ENCODE measurements at regions of chr2 and their contacts with region 1.

Region 1: GRCh38 chr2:175855794-175856453 is 146.1 kb downstream of the LNPK start:
- DNase-seq: peak; percentile 75
- H3K4me3 Mint-ChIP-seq: peak overlapping the region; percentile 18
- H3K27ac Mint-ChIP-seq: peak overlapping the region; percentile 75
- H3K4me1 Mint-ChIP-seq: peaks cover 7% of the 10 kb centered on the region
- H3K27me3 Mint-ChIP-seq: peaks cover 5% of the 10 kb centered on the region
- CTCF ChIP-seq: no peak

Region 2: GRCh38 chr2:175734679-175735078 is 121.2 kb before region 1 on chr2:
- CTCF ChIA-PET with region 1: no interaction called
- POLR2A ChIA-PET with region 1: no interaction called
- intact Hi-C with region 1: loop called (anchors 10 kb)
- DNase-seq: no peak
- H3K4me3 Mint-ChIP-seq: no peak overlapping the region
- H3K27ac Mint-ChIP-seq: no peak overlapping the region
- H3K4me1 Mint-ChIP-seq: no peaks in the 10 kb centered on the region
- H3K27me3 Mint-ChIP-seq: no peaks in the 10 kb centered on the region
- CTCF ChIP-seq: no peak

Region 3: DNA sequence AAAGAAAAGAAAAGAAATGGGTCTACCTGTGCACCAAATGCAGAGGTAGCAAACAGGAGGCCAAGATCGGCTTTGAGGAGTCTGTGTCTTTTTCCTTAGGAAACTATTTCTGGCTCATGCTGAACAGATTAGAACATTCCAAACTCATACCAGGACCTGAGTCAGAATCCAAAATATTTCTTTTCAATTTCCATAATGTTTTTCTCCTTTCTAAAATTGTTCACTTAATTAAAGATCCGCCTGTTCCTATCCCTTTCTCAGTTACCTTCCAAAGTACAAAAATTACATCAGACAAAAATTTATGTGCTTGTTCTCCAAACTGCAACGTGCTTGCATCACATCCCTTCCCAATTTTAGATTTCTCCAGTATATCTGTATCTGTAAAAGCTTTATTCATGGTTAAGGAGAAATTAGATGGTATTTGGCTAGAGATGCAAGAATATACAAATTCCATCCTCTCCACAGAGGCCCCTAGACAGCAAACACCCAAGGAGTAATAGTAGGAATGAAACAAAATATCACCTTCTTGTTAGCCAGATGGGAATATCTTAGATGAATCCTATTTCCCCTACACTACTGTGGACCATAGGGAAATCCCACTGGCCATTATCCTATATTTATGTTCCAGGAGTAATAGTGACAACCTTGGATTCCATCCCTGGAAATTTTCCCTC is 15.5 kb after region 1 on chr2:
- CTCF ChIA-PET with region 1: no interaction called
- POLR2A ChIA-PET with region 1: no interaction called
- intact Hi-C with region 1: no loop called
- DNase-seq: no peak
- H3K4me3 Mint-ChIP-seq: no peak overlapping the region
- H3K27ac Mint-ChIP-seq: no peak overlapping the region
- H3K4me1 Mint-ChIP-seq: peaks cover 7% of the 10 kb centered on the region
- H3K27me3 Mint-ChIP-seq: no peaks in the 10 kb centered on the region
- CTCF ChIP-seq: no peak

Region 4: DNA sequence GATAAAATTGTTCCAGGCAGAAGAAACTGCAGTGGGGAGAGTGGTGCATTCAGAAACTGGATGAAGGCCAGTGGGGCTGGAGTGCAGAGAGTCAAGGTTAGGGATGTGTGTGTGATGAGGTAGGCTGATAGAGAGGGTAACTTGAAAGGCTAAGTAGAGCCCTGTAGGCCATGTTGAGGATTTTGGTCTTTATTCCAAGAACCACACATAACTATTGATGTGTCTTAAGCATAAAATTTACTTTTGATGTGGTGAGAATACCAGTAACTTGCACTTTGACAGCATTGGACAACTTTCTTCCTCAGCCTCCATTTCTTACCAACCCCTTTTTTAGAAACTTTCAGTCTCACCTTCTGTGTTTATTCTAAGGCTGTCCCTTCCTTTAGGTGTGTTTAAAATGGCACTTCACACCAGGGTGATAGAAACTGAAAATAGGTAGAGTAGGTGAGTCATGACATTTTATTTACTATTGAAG is 435.9 kb after region 1 on chr2:
- CTCF ChIA-PET with region 1: no interaction called
- POLR2A ChIA-PET with region 1: no interaction called
- intact Hi-C with region 1: no loop called
- DNase-seq: peak; percentile 18
- H3K4me3 Mint-ChIP-seq: no peak overlapping the region
- H3K27ac Mint-ChIP-seq: no peak overlapping the region
- H3K4me1 Mint-ChIP-seq: peaks cover 24% of the 10 kb centered on the region
- H3K27me3 Mint-ChIP-seq: no peaks in the 10 kb centered on the region
- CTCF ChIP-seq: no peak

Measured in MCF 10A (cell line).